Activated CD4-positive, alpha-beta T cell treated with anti-CD3 and anti-CD28 coated beads for 36 hours (primary cell): ENCODE measurements at regions of chr9 and their contacts with region 1.

Region 1: DNA sequence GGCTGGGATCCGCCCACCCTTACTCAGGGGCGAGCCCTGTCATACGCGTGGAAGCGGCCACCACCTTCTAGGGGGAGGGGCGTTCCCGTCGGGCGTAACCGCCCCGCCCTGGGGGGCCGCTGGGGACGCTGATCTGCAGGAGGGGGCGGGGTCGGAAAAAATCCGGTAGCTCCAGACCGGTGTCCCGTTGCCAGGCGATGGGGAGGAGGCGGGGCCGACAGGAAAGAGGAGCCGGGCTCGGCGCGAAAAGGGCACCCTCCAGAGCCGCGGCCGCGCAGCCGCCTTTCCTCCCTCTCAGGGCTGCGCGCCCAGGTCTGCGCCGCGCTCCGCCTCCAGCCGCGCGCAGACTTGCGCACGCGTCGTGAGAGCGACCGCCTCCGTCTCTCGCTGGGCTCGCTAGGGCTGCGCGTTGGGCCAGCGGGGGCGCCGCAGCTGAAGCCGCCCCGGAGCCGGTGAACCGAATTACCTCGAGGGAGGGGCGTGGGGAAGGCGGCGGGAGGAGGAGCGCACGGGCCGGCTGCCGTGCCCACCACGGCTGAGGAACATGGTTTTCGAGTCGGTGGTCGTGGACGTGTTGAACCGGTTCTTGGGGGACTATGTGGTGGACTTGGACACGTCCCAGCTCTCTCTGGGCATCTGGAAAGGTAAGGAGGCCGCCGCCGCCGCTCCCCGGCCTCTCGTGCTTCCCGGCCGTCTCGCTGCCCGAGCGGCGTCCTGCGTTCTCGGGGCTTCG is at the start of gene VPS13A:
- DNase-seq: peak; percentile 98
- ATAC-seq: peak; percentile 92
- H3K4me3 Mint-ChIP-seq: peak within 1 kb of the TSS; percentile 97
- H3K27ac Mint-ChIP-seq: peak within 1 kb of the TSS; percentile 93
- H3K4me1 Mint-ChIP-seq: peaks cover 23% of the 10 kb centered on the region
- H3K27me3 Mint-ChIP-seq: no peaks in the 10 kb centered on the region
- total RNA-seq, gene VPS13A: 33.3 to 33.6 TPM

Region 2: DNA sequence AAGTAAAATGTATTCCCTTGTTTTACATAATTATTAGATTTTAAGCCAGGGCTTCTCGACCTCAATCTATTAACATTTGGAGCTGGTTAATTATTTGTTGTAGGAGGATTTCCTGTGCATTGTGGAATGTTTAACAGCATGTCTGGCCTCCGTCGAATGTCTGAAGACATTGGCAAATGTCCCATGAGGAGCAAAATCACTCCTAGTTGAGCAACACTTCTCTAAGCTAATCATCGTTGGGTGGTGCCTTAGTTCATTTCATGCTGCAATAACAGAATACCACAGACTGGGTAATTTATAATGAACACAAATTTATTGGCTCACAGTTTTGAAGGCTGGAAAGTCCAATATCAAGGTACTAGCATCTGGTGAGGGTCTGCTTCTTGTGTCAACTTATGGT is 13.4 kb before region 1 on chr9:
- CTCF ChIA-PET with region 1: interaction called, 11 read pairs
- POLR2A ChIA-PET with region 1: interaction called, 3 read pairs
- intact Hi-C with region 1: loop called in 1 of 2 experiments (anchors 1 kb)
- DNase-seq: no peak
- ATAC-seq: no peak
- H3K4me3 Mint-ChIP-seq: no peak overlapping the region
- H3K27ac Mint-ChIP-seq: no peak overlapping the region
- H3K4me1 Mint-ChIP-seq: peaks cover 1% of the 10 kb centered on the region
- H3K27me3 Mint-ChIP-seq: peaks cover 4% of the 10 kb centered on the region

Region 3: DNA sequence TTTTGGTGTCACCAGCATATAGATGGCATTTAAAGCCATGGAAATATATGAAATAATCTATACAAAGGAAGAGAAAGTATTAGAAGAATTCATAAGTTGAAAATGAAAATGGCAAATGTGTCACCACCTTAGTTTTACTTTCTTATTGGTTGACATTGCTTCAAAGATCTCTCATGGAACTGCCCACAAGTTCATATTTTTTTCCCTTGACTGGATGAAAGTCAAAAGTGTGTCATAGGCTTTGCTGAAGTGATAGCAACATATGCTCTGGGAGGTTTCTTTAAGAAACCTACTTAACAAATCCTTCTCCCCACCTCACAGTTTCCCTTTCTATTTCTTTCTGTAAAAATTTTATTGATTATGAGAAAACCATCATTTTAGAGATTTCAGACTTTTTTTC is 127.2 kb after region 1 on chr9:
- CTCF ChIA-PET with region 1: no interaction called
- POLR2A ChIA-PET with region 1: no interaction called
- intact Hi-C with region 1: loop called in 1 of 2 experiments (anchors 1 kb)
- DNase-seq: no peak
- ATAC-seq: peak; percentile 99
- H3K4me3 Mint-ChIP-seq: no peak overlapping the region
- H3K27ac Mint-ChIP-seq: no peak overlapping the region
- H3K4me1 Mint-ChIP-seq: peaks cover 13% of the 10 kb centered on the region
- H3K27me3 Mint-ChIP-seq: no peaks in the 10 kb centered on the region

Region 4: GRCh38 chr9:78235756-78236538 is 1058.6 kb after region 1 on chr9 and contains the start of gene CEP78:
- CTCF ChIA-PET with region 1: no interaction called
- POLR2A ChIA-PET with region 1: no interaction called
- intact Hi-C with region 1: loop called in 1 of 2 experiments (anchors 5 kb)
- DNase-seq: peak; percentile 94
- ATAC-seq: peak; percentile 98
- H3K4me3 Mint-ChIP-seq: no peak within 1 kb of the TSS
- H3K27ac Mint-ChIP-seq: peak within 1 kb of the TSS; percentile 93
- H3K4me1 Mint-ChIP-seq: peaks cover 30% of the 10 kb centered on the region
- H3K27me3 Mint-ChIP-seq: no peaks in the 10 kb centered on the region
- total RNA-seq, gene CEP78: 35.0 to 39.2 TPM

Region 5: DNA sequence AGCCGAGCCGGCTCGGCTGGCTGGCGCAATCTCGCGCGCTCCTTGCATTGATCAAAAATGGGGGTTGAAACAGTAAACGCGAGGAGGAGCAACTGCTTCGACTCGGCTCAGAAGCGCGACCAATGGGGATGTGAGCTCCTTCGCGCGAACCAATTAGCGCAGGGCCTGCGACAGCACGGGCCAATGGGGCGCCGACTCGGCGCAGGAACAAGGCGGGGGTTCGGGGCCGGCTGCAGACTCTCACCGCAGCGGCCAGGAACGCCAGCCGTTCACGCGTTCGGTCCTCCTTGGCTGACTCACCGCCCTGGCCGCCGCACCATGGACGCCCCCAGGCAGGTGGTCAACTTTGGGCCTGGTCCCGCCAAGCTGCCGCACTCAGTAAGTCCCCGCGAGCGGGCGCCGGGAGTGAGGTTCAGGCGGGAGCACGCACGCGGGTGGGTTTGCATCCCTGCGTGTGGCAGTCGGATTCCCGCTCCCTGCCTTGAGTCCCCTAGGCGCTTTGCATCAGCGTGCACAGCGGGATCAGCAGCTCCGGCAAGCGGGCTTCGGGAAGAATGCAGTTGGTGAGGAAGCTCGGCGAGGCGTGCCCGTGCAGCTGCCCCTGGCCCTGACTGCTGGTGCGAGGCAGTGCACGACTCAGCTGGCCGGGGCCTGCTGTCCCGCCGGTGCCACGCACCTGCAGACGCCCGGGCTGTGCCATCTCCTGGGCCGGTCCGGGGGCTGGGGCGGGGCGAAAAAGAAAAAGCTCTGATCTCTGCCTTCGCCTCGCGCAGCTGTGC is 1119.8 kb after region 1 on chr9 and contains the start of gene PSAT1:
- CTCF ChIA-PET with region 1: no interaction called
- POLR2A ChIA-PET with region 1: no interaction called
- intact Hi-C with region 1: loop called (anchors 2 to 5 kb)
- DNase-seq: peak; percentile 96
- ATAC-seq: peak; percentile 98
- H3K4me3 Mint-ChIP-seq: peak within 1 kb of the TSS; percentile 91
- H3K27ac Mint-ChIP-seq: peak within 1 kb of the TSS; percentile 97
- H3K4me1 Mint-ChIP-seq: peaks cover 29% of the 10 kb centered on the region
- H3K27me3 Mint-ChIP-seq: no peaks in the 10 kb centered on the region
- total RNA-seq, gene PSAT1: 145 to 190 TPM